CD8-positive, alpha-beta T cell (primary cell): ENCODE measurements at regions of chr7 and their contacts with region 1.

Region 1: GRCh38 chr7:2482725-2483451 is 6.7 kb upstream of the GRIFIN start:
- DNase-seq: peak in 1 of 9 experiments; percentile 14
- ATAC-seq: no peak
- H3K4me3 ChIP-seq: no peak overlapping the region
- H3K4me3 Mint-ChIP-seq: no peak overlapping the region
- H3K27ac ChIP-seq: no peak overlapping the region
- H3K27ac Mint-ChIP-seq: no peak overlapping the region
- H3K4me1 ChIP-seq: peaks cover 7% of the 10 kb centered on the region
- H3K4me1 Mint-ChIP-seq: no peaks in the 10 kb centered on the region
- H3K27me3 ChIP-seq: no peaks in the 10 kb centered on the region
- H3K27me3 Mint-ChIP-seq: no peaks in the 10 kb centered on the region
- CTCF ChIP-seq: no peak

Region 2: GRCh38 chr7:2354186-2354938 is 128.5 kb before region 1 on chr7 and contains the start of gene EIF3B:
- CTCF ChIA-PET with region 1: no interaction called
- POLR2A ChIA-PET with region 1: no interaction called
- intact Hi-C with region 1: no loop called
- DNase-seq: peak; percentile 80 to 97 (median 90)
- ATAC-seq: peak; percentile 84
- H3K4me3 ChIP-seq: peak within 1 kb of the TSS; percentile 72 to 74
- H3K4me3 Mint-ChIP-seq: peak within 1 kb of the TSS; percentile 88
- H3K27ac ChIP-seq: peak within 1 kb of the TSS; percentile 99
- H3K27ac Mint-ChIP-seq: peak within 1 kb of the TSS; percentile 99
- H3K4me1 ChIP-seq: peaks cover 45% of the 10 kb centered on the region
- H3K4me1 Mint-ChIP-seq: peaks cover 40% of the 10 kb centered on the region
- H3K27me3 ChIP-seq: no peaks in the 10 kb centered on the region
- H3K27me3 Mint-ChIP-seq: no peaks in the 10 kb centered on the region
- CTCF ChIP-seq: no peak
- total RNA-seq, gene EIF3B: 234 to 239 TPM

Region 3: DNA sequence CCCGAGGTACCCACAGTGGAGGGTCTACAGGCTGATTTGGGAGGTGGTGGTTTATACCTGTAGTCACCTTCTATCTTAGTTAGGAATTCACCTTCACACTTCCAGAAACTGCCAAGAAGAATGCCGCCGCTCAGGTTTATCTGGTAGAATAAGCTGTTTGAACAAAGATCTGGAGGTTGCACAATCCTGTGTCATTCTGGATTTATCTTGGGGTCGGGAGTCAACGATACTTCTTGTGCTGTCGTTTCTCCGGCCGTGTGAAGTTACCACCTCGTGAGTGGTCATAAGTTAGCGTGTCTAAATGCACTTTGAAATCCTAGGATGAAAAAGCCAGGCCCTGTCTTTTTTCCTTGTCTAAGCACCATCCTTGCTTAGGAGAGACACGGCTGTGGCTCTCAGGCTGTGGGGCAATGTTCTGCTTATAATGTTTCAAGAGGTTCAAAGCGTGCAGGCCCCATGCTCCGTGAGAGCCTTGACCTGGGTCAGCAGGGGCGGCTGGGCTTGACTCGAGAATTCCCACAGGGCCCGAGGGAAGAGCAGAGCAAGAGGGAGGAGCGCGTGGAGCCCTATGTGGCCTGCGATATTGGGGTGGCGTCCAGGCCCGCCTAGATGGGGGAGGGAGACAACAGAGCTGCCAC is 42.2 kb before region 1 on chr7:
- CTCF ChIA-PET with region 1: no interaction called
- POLR2A ChIA-PET with region 1: no interaction called
- intact Hi-C with region 1: no loop called
- DNase-seq: no peak
- ATAC-seq: no peak
- H3K4me3 ChIP-seq: no peak overlapping the region
- H3K4me3 Mint-ChIP-seq: no peak overlapping the region
- H3K27ac ChIP-seq: no peak overlapping the region
- H3K27ac Mint-ChIP-seq: no peak overlapping the region
- H3K4me1 ChIP-seq: no peaks in the 10 kb centered on the region
- H3K4me1 Mint-ChIP-seq: peaks cover 6% of the 10 kb centered on the region
- H3K27me3 ChIP-seq: no peaks in the 10 kb centered on the region
- H3K27me3 Mint-ChIP-seq: no peaks in the 10 kb centered on the region
- CTCF ChIP-seq: no peak

Region 4: GRCh38 chr7:2460188-2460587 is 22.7 kb before region 1 on chr7:
- CTCF ChIA-PET with region 1: no interaction called
- POLR2A ChIA-PET with region 1: no interaction called
- intact Hi-C with region 1: no loop called
- DNase-seq: no peak
- ATAC-seq: no peak
- H3K4me3 ChIP-seq: no peak overlapping the region
- H3K4me3 Mint-ChIP-seq: no peak overlapping the region
- H3K27ac ChIP-seq: no peak overlapping the region
- H3K27ac Mint-ChIP-seq: no peak overlapping the region
- H3K4me1 ChIP-seq: peaks cover 8% of the 10 kb centered on the region
- H3K4me1 Mint-ChIP-seq: peaks cover 9% of the 10 kb centered on the region
- H3K27me3 ChIP-seq: no peaks in the 10 kb centered on the region
- H3K27me3 Mint-ChIP-seq: no peaks in the 10 kb centered on the region
- CTCF ChIP-seq: no peak

Region 5: DNA sequence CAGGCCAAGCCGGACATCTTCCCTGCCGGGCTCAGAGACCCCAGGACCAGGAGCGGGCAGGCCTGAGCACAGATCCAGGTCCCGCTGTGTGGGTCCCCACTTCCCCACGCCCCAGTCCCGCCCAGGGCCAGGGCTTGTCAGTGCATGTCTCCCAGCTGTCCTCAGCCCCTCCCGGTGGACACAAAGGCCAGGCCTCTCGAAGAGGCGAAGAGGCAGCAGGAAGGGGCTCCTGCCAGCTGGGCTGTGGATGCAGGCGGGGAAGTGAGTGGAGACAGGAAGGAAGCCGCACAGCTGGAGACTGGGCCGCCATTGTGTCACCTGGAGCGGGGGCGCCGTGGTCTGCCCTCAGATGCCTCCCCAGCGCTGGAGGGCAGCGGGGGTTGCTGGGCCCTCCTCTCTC is 11.5 kb before region 1 on chr7:
- CTCF ChIA-PET with region 1: interaction called, 11 read pairs
- POLR2A ChIA-PET with region 1: no interaction called
- intact Hi-C with region 1: no loop called
- DNase-seq: no peak
- ATAC-seq: no peak
- H3K4me3 ChIP-seq: no peak overlapping the region
- H3K4me3 Mint-ChIP-seq: no peak overlapping the region
- H3K27ac ChIP-seq: no peak overlapping the region
- H3K27ac Mint-ChIP-seq: no peak overlapping the region
- H3K4me1 ChIP-seq: peaks cover 5% of the 10 kb centered on the region
- H3K4me1 Mint-ChIP-seq: peaks cover 2% of the 10 kb centered on the region
- H3K27me3 ChIP-seq: no peaks in the 10 kb centered on the region
- H3K27me3 Mint-ChIP-seq: peaks cover 2% of the 10 kb centered on the region
- CTCF ChIP-seq: no peak